Body of pancreas (tissue), 4 donors: ENCODE measurements at regions of chr2 and their contacts with region 1.

Region 1: GRCh38 chr2:68121873-68122679 is 35.6 kb upstream of the PNO1 start:
- DNase-seq: peak; percentile 87 to 96 (median 90)
- ATAC-seq: peak; percentile 71
- H3K4me3 ChIP-seq: no peak overlapping the region
- H3K27ac ChIP-seq: no peak overlapping the region
- H3K4me1 ChIP-seq: peaks cover 15% of the 10 kb centered on the region
- H3K27me3 ChIP-seq: no peaks in the 10 kb centered on the region
- CTCF ChIP-seq: peak; percentile 87 to 97 (median 94)
- POLR2A ChIP-seq: peak in 1 of 3 donors; percentile 7

Region 2: GRCh38 chr2:67997528-67997900 is 124.6 kb before region 1 on chr2:
- intact Hi-C with region 1: no loop called
- DNase-seq: no peak
- ATAC-seq: no peak
- H3K4me3 ChIP-seq: no peak overlapping the region
- H3K27ac ChIP-seq: no peak overlapping the region
- H3K4me1 ChIP-seq: no peaks in the 10 kb centered on the region
- H3K27me3 ChIP-seq: no peaks in the 10 kb centered on the region
- CTCF ChIP-seq: no peak
- POLR2A ChIP-seq: no peak

Region 3: GRCh38 chr2:68279691-68280090 is 157.6 kb after region 1 on chr2:
- intact Hi-C with region 1: loop called (anchors 5 kb)
- DNase-seq: no peak
- ATAC-seq: no peak
- H3K4me3 ChIP-seq: no peak overlapping the region
- H3K27ac ChIP-seq: no peak overlapping the region
- H3K4me1 ChIP-seq: no peaks in the 10 kb centered on the region
- H3K27me3 ChIP-seq: no peaks in the 10 kb centered on the region
- CTCF ChIP-seq: no peak
- POLR2A ChIP-seq: no peak

Region 4: GRCh38 chr2:68290901-68291300 is 168.8 kb after region 1 on chr2:
- intact Hi-C with region 1: loop called (anchors 5 kb)
- DNase-seq: peak in 1 of 4 donors; percentile 8
- ATAC-seq: no peak
- H3K4me3 ChIP-seq: no peak overlapping the region
- H3K27ac ChIP-seq: no peak overlapping the region
- H3K4me1 ChIP-seq: no peaks in the 10 kb centered on the region
- H3K27me3 ChIP-seq: no peaks in the 10 kb centered on the region
- CTCF ChIP-seq: no peak
- POLR2A ChIP-seq: no peak

Region 5: GRCh38 chr2:68441179-68441993 is 319.3 kb after region 1 on chr2:
- intact Hi-C with region 1: loop called (anchors 10 kb)
- DNase-seq: peak; percentile 77 to 89 (median 82)
- ATAC-seq: peak; percentile 76
- H3K4me3 ChIP-seq: no peak overlapping the region
- H3K27ac ChIP-seq: peak overlapping the region in 1 of 4 donors; percentile 17
- H3K4me1 ChIP-seq: peaks cover 22% of the 10 kb centered on the region
- H3K27me3 ChIP-seq: no peaks in the 10 kb centered on the region
- CTCF ChIP-seq: peak; percentile 67 to 89 (median 82)
- POLR2A ChIP-seq: no peak